ENCODE measurements at regions of chr3 and their contacts with region 1.

Region 1: DNA sequence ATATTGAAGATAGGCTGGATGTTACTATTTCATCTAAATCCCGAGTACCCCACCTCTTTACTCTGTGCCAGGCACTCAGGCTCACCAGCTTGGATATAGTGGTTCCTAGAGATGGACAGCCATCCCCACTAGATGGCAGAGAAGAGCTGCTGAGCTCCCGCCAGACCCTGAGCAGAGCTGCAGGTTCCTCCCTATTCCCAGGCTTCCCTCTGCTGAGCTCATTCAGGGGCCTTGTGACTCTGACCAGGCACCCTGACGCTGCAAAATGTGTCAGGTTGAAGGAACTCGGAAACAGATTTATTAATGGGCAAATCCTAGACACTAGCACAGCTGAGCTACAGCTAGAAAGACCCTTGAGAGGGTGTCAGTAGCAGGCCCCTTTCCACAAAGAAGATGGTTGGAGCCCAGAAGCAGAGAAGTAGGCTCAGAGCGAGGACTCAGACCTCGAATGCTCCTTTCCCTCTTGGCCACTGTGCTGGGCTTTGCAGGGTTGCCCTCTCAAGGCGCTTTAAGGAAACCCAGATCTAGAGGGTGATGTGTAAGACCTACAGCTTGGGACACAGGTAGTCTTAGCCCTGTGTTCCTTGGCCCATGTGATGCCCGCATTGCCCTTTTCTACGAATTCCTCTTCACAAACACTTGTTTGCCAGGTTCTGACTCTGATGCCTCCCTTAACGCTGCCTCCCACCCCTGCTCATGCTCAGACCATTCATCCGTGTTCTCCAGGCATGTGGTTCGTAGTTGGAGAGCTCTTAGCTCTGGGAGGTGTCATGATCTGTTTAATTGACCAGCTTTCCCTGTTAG is 38.0 kb upstream of the RHO start:
- DNase-seq: peak; percentile 87
- H3K4me3 ChIP-seq: no peak overlapping the region
- H3K27ac ChIP-seq: no peak overlapping the region
- H3K4me1 ChIP-seq: no peaks in the 10 kb centered on the region
- H3K27me3 ChIP-seq: no peaks in the 10 kb centered on the region
- CTCF ChIP-seq: peak; percentile 86

Region 2: GRCh38 chr3:129383292-129383860 is 107.1 kb before region 1 on chr3:
- CTCF ChIA-PET with region 1: interaction called, 11 read pairs
- POLR2A ChIA-PET with region 1: no interaction called
- intact Hi-C with region 1: no loop called
- DNase-seq: peak; percentile 78
- H3K4me3 ChIP-seq: no peak overlapping the region
- H3K27ac ChIP-seq: no peak overlapping the region
- H3K4me1 ChIP-seq: no peaks in the 10 kb centered on the region
- H3K27me3 ChIP-seq: no peaks in the 10 kb centered on the region
- CTCF ChIP-seq: peak; percentile 80

Region 3: DNA sequence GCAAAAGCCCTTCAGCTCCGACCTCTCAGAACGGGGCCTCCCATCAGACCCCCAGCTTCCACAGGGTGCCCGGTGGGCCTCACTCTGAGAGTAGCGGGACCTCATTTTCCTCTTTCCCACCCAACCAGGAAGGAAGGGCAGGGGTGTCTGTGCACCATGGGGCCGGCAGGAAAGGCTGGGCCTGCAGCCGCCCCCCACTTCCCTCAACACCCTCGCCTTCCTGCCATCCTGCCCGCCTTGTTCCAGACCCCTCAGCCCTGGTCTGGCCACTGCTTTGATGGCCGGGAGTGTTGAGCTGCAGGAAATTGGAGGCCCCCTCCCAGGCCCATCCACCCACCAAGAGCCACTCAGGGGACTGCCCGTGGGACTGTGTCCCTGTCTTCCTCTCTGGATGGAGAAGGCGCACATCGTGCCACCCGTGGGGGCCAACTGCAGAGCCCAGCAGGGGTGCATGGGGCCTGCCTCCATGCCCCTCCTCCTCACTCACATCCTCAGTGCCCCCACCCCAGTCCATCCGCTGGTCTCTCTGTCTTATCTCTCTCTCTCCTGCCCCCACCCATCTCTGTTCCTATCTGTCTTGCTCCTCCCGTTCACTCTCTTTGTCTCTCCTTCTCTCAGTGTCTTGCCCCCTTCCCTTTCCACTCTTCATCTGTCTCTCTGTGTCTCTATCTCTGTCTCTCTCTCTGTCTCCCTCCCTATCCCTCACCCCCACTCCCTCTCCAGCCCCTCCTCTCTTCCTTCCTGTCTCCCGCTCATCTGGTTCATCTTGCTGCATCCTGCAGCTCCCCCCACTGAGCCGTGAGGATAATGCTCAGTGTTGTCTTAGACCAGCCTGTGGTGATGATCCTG is 117.9 kb after region 1 on chr3:
- CTCF ChIA-PET with region 1: interaction called, 3 read pairs
- POLR2A ChIA-PET with region 1: no interaction called
- intact Hi-C with region 1: loop called (anchors 2 kb)
- DNase-seq: peak; percentile 84
- H3K4me3 ChIP-seq: no peak overlapping the region
- H3K27ac ChIP-seq: no peak overlapping the region
- H3K4me1 ChIP-seq: peaks cover 19% of the 10 kb centered on the region
- H3K27me3 ChIP-seq: no peaks in the 10 kb centered on the region
- CTCF ChIP-seq: peak; percentile 50; the same call in 1 of the 2 replicates

Region 4: GRCh38 chr3:129824926-129825541 is 334.6 kb after region 1 on chr3:
- CTCF ChIA-PET with region 1: interaction called, 16 read pairs
- POLR2A ChIA-PET with region 1: no interaction called
- intact Hi-C with region 1: loop called (anchors 2 kb)
- DNase-seq: peak; percentile 68
- H3K4me3 ChIP-seq: no peak overlapping the region
- H3K27ac ChIP-seq: no peak overlapping the region
- H3K4me1 ChIP-seq: peaks cover 11% of the 10 kb centered on the region
- H3K27me3 ChIP-seq: no peaks in the 10 kb centered on the region
- CTCF ChIP-seq: peak; percentile 78

Region 5: GRCh38 chr3:129992781-129993180 is 502.3 kb after region 1 on chr3:
- CTCF ChIA-PET with region 1: no interaction called
- POLR2A ChIA-PET with region 1: no interaction called
- intact Hi-C with region 1: loop called (anchors 10 kb)
- DNase-seq: no peak
- H3K4me3 ChIP-seq: no peak overlapping the region
- H3K27ac ChIP-seq: no peak overlapping the region
- H3K4me1 ChIP-seq: no peaks in the 10 kb centered on the region
- H3K27me3 ChIP-seq: peaks cover 14% of the 10 kb centered on the region
- CTCF ChIP-seq: peak; percentile 36

Measured in A673 (cell line).